ENCODE measurements at regions of chr6 and their contacts with region 1.

Region 1: DNA sequence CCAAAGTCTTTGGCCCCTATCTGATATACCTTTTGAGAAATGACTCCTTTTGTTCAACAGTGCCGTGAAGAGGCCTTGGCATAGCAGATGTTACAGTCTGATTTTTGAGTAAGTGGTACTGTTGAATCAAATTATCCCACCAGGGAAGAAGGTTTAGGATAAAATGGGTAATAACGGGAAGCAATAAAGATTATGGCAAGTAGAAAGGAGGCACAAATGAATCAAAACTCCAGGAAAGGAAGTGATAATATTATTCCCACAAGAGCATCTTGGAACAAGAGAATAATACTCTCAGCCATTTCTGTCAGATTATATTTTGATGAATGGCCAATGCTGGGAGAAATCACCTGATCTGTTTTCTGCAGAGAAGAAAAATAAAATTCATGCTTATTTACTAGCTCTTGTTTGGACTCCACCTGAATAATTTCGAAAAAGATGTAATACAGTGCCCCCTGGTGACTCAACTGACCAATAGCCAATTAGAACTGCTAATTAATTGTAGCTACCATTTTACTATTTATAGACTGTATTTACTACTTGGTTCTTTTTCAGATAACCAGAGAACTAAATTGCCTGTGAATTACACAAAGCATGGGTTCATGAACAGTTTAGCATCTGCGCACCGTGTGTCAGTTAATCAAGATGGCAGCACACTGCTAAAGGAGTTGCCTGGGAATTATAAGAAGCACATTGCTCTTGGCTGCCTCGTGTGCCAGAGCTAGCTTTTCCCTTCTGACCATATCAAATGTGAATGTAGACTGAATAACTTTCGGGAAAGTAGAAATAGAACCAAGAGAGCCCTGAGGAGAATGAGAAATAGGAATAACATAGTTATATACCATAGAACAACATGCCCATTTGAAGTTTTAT is 78.5 kb upstream of the TRDN start:
- DNase-seq: peak; percentile 5
- H3K4me3 ChIP-seq: no peak overlapping the region
- H3K27ac ChIP-seq: no peak overlapping the region
- H3K4me1 ChIP-seq: no peaks in the 10 kb centered on the region
- H3K27me3 ChIP-seq: no peaks in the 10 kb centered on the region
- CTCF ChIP-seq: peak; percentile 54 to 58

Region 2: DNA sequence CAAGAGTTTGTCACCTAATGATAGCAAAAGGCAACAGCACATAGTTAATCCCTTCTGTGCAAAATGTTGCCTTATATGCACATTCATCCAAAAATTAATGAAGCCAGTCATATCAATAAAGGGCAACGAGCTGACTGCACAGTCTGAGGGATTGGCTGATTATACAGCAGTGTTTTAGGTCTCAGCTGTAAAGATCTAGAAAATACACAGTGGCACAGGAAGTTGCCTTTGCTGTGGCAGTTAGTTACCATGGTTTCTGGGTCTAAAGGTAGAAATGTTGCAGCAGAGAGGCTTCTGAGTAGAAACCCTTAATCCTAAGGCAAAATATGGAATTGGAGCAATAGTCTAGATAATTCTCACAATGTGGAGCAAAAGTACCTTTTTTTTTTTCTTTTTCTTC is 836.4 kb before region 1 on chr6:
- CTCF ChIA-PET with region 1: no interaction called
- dilution Hi-C with region 1: no loop called
- in situ Hi-C with region 1: loop called in 1 of 2 experiments (anchors 25 kb)
- intact Hi-C with region 1: no loop called
- DNase-seq: no peak
- H3K4me3 ChIP-seq: no peak overlapping the region
- H3K27ac ChIP-seq: no peak overlapping the region
- H3K4me1 ChIP-seq: no peaks in the 10 kb centered on the region
- H3K27me3 ChIP-seq: no peaks in the 10 kb centered on the region
- CTCF ChIP-seq: no peak

Region 3: DNA sequence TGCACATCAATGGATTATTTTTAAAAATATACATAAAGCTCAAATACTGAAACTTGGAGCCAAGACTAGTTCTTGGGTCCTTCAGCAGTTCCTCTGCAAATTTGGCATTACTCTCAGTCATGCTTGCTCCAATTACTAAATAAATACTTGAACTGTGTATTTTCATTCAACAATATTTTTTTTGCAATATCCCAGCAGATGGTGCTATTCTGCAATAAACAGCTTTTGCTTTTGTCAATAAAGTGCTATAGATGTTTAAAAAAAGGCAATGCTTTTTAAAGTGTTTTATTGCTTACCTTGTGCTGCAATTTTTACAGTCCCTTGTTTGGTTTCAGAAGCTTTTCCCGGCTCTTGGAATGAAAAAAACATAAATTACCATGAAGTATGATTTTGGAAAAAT is 321.9 kb before region 1 on chr6:
- CTCF ChIA-PET with region 1: no interaction called
- dilution Hi-C with region 1: no loop called
- in situ Hi-C with region 1: no loop called
- intact Hi-C with region 1: loop called (anchors 1 kb)
- DNase-seq: no peak
- H3K4me3 ChIP-seq: no peak overlapping the region
- H3K27ac ChIP-seq: no peak overlapping the region
- H3K4me1 ChIP-seq: no peaks in the 10 kb centered on the region
- H3K27me3 ChIP-seq: no peaks in the 10 kb centered on the region
- CTCF ChIP-seq: peak; percentile 11 to 45

Region 4: GRCh38 chr6:123415844-123416468 is 299.3 kb before region 1 on chr6:
- CTCF ChIA-PET with region 1: interaction called, 22 read pairs
- dilution Hi-C with region 1: no loop called
- in situ Hi-C with region 1: loop called (anchors 5 to 10 kb)
- intact Hi-C with region 1: loop called (anchors 1 kb)
- DNase-seq: peak; percentile 23
- H3K4me3 ChIP-seq: no peak overlapping the region
- H3K27ac ChIP-seq: no peak overlapping the region
- H3K4me1 ChIP-seq: no peaks in the 10 kb centered on the region
- H3K27me3 ChIP-seq: no peaks in the 10 kb centered on the region
- CTCF ChIP-seq: peak; percentile 68 to 73

Region 5: GRCh38 chr6:123529843-123530242 is 185.4 kb before region 1 on chr6:
- CTCF ChIA-PET with region 1: no interaction called
- dilution Hi-C with region 1: no loop called
- in situ Hi-C with region 1: no loop called
- intact Hi-C with region 1: no loop called
- DNase-seq: no peak
- H3K4me3 ChIP-seq: no peak overlapping the region
- H3K27ac ChIP-seq: no peak overlapping the region
- H3K4me1 ChIP-seq: no peaks in the 10 kb centered on the region
- H3K27me3 ChIP-seq: no peaks in the 10 kb centered on the region
- CTCF ChIP-seq: no peak